HepG2 (cell line): ENCODE measurements at regions of chr9 and their contacts with region 1.

Region 1: GRCh38 chr9:98848450-98849149 is 41.1 kb downstream of the GALNT12 start:
- DNase-seq: peak; percentile 97
- ATAC-seq: peak; percentile 99
- H3K4me3 ChIP-seq: no peak overlapping the region
- H3K27ac ChIP-seq: no peak overlapping the region
- H3K4me1 ChIP-seq: peaks cover 11% of the 10 kb centered on the region
- H3K27me3 ChIP-seq: peaks cover 0 to 1% of the 10 kb centered on the region in 2 experiments; a peak in 2 of 5 replicates
- CTCF ChIP-seq: peak; percentile 96
- EP300 ChIP-seq: no peak
- POLR2A ChIP-seq: no peak
- RAD21 ChIP-seq: peak; percentile 82

Region 2: DNA sequence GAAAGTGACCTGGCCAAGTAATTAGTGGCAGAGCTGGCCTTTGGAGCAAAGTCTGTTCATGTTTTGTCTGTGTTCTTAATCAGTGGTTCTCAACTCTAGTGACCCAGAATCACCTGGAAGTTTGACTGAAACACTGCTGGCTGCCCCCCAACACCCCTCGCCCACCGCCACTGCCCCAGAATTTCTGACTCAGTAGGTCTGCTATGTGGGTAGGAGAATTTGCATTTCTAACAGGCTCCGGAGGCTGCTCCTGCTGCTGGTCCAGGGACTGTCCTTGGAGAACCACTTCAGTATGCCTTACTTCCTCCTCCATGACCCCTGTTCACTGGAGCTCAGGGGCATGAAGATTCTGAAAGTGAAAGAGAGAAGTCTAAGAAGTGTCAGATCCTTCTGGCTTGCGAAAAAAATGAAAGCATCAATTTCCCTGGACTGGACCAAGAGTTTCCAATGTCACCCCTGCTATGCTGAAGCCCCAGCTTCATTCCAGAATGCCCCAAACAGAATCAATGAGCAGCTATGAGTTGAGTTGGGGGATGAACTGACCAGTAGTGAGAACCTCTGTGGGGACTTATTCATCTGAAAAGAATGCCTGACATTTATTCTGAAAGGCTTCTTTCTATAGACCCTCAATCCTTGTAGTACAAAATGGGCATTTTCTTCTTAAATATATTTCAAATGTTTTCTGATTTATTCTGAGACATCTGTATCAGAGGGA is 74.3 kb after region 1 on chr9:
- CTCF ChIA-PET with region 1: no interaction called
- POLR2A ChIA-PET with region 1: no interaction called
- in situ Hi-C with region 1: no loop called
- intact Hi-C with region 1: no loop called
- DNase-seq: no peak
- ATAC-seq: no peak
- H3K4me3 ChIP-seq: no peak overlapping the region
- H3K27ac ChIP-seq: no peak overlapping the region
- H3K4me1 ChIP-seq: peaks cover 12% of the 10 kb centered on the region; the same call in 1 of the 2 replicates
- H3K27me3 ChIP-seq: peaks cover 4 to 12% of the 10 kb centered on the region in 2 experiments; a peak in 3 of 5 replicates
- CTCF ChIP-seq: no peak
- EP300 ChIP-seq: no peak
- POLR2A ChIP-seq: no peak
- RAD21 ChIP-seq: no peak

Region 3: DNA sequence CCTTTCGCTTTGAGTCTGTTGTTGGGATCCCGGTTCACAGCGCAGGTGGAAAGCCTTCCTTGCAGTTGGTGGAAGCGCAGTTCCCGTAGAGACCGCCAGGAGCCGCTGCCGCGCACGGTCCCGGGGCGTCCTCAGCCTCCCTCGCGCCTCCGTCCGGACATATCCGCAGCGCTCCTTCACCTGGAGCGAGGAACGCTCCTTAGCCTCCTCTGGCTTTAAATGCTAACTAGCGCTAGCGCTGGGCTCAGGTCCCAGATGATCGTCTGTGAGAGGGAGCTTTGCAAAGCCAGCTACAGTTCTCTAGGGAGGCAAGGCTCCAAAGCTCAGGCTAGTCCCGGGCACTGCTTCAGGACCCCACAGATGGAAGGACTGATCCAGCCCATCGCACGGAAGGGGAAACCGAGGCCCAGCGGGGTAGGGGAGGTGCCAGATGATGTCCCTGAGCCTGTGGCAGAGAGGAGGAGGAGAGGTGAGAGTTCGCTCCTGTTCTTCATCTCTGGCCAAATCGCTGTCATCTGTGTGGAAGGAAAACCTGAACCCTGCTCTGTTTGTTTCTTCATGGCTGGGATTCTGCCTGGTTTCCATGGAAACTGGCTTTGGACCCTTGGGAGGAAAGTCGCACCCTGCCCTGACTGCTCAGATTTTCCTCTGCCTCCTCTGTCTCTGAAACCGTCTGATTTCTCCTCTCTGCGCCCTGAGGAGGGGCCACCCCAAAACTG is 126.6 kb after region 1 on chr9:
- CTCF ChIA-PET with region 1: interaction called, 5 read pairs
- POLR2A ChIA-PET with region 1: no interaction called
- in situ Hi-C with region 1: no loop called
- intact Hi-C with region 1: loop called (anchors 2 kb)
- DNase-seq: peak; percentile 34
- ATAC-seq: peak; percentile 94
- H3K4me3 ChIP-seq: peak overlapping the region in 1 of 3 experiments; percentile 15; a peak in 1 of 6 replicates
- H3K27ac ChIP-seq: no peak overlapping the region
- H3K4me1 ChIP-seq: peaks cover 6% of the 10 kb centered on the region
- H3K27me3 ChIP-seq: peaks cover 4 to 43% of the 10 kb centered on the region in 2 experiments; a peak in 3 of 5 replicates
- CTCF ChIP-seq: peak; percentile 94
- EP300 ChIP-seq: no peak
- POLR2A ChIP-seq: no peak
- RAD21 ChIP-seq: peak; percentile 76

Region 4: DNA sequence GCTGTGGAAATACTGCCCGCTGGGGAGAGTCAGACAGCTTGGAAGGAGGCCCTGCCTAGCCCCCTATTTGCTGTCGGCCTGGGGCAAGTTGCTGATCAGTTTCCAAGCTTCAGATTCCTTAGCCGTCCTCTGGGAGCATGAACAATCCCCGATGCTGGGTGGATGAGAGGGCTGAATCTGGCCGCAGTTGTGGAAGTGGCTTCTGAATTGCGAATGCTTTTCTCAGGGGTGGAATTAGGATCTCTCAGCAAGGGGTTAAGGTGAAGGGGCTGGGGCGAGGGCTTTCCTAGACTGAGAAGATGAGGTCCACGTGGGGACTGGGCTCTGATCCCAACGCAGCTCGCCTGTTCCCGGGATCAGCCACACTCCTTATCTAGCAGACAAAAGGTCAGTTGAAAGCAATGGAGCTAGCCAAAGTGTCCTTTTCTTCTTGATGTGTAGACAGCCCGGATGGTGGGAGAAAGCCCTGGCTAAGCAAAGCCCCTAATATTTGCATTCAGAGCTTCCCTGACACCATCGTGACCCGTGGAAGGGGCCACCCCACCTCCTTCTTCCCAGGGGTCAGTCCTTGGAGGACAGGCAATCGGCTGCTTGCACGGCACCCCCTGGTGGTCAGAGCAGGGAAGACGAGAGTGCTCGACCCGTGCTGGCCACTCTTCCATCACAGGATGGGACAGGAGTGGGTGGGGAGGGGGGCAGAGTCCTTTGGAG is 150.0 kb after region 1 on chr9:
- CTCF ChIA-PET with region 1: interaction called, 27 read pairs
- POLR2A ChIA-PET with region 1: no interaction called
- in situ Hi-C with region 1: loop called (anchors 5 kb)
- intact Hi-C with region 1: loop called (anchors 1 kb)
- DNase-seq: peak; percentile 20
- ATAC-seq: peak; percentile 97
- H3K4me3 ChIP-seq: no peak overlapping the region
- H3K27ac ChIP-seq: no peak overlapping the region
- H3K4me1 ChIP-seq: no peaks in the 10 kb centered on the region
- H3K27me3 ChIP-seq: peaks cover 0 to 9% of the 10 kb centered on the region in 2 experiments; a peak in 1 of 5 replicates
- CTCF ChIP-seq: peak; percentile 92
- EP300 ChIP-seq: no peak
- POLR2A ChIP-seq: no peak
- RAD21 ChIP-seq: peak; percentile 53; the same call in 1 of the 2 replicates

Region 5: DNA sequence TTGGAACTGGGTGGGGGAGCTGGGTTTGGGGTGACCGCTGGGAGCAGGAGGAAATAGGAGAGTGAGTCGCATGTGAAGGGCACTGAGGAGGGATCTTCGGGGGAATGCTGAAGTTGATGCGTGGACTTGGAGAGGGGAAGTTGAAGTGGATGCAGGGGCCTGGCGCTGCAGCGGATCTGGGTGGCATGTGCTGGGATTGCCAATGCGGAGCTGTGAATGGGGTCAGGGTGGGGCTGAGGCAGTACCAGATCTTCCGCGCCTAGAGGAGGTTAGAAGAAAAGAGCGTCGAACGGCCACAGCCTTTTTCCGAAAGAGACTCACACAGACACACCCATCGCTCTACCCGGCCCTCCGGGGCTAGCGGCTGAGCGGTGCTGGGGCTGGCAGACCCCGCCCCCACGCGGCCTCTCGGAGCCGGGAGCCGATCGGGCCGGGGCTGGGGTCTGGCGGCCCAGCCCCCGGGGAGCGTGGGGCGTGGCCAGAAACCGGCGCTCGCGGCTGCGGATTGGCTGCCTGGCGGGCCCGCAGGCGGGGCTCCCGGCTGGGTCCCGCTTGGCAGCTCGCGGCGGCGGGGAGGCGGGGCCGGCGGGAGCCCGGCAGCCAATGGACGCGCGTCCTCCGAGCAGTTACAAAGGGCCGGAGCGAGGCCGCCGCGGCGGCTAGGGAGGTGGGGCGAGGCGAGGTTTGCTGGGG is 256.0 kb after region 1 on chr9 and contains the start of gene TGFBR1:
- CTCF ChIA-PET with region 1: no interaction called
- POLR2A ChIA-PET with region 1: no interaction called
- in situ Hi-C with region 1: no loop called
- intact Hi-C with region 1: loop called (anchors 1 kb)
- DNase-seq: peak; percentile 78
- ATAC-seq: peak; percentile 91
- H3K4me3 ChIP-seq: peak within 1 kb of the TSS; percentile 65 to 86 (median 78)
- H3K27ac ChIP-seq: peak within 1 kb of the TSS; percentile 46
- H3K4me1 ChIP-seq: peaks cover 41% of the 10 kb centered on the region
- H3K27me3 ChIP-seq: no peaks in the 10 kb centered on the region; a peak in 1 of 5 replicates
- CTCF ChIP-seq: peak; percentile 21; the same call in 1 of the 2 replicates
- EP300 ChIP-seq: no peak
- POLR2A ChIP-seq: no peak; a peak in 1 of 4 replicates
- RAD21 ChIP-seq: no peak
- total RNA-seq, gene TGFBR1: 21.2 and 23.9 TPM in 2 replicates

Region 6: GRCh38 chr9:99130069-99130468 is 281.5 kb after region 1 on chr9:
- CTCF ChIA-PET with region 1: no interaction called
- POLR2A ChIA-PET with region 1: no interaction called
- in situ Hi-C with region 1: loop called (anchors 5 kb)
- intact Hi-C with region 1: no loop called
- DNase-seq: no peak
- ATAC-seq: no peak
- H3K4me3 ChIP-seq: no peak overlapping the region
- H3K27ac ChIP-seq: no peak overlapping the region
- H3K4me1 ChIP-seq: no peaks in the 10 kb centered on the region
- H3K27me3 ChIP-seq: no peaks in the 10 kb centered on the region
- CTCF ChIP-seq: no peak
- EP300 ChIP-seq: no peak
- POLR2A ChIP-seq: no peak
- RAD21 ChIP-seq: no peak

Region 7: GRCh38 chr9:99140685-99141314 is 292.2 kb after region 1 on chr9:
- CTCF ChIA-PET with region 1: interaction called, 6 read pairs
- POLR2A ChIA-PET with region 1: no interaction called
- in situ Hi-C with region 1: no loop called
- intact Hi-C with region 1: loop called (anchors 1 kb)
- DNase-seq: peak; percentile 35
- ATAC-seq: peak; percentile 79
- H3K4me3 ChIP-seq: no peak overlapping the region
- H3K27ac ChIP-seq: no peak overlapping the region
- H3K4me1 ChIP-seq: no peaks in the 10 kb centered on the region
- H3K27me3 ChIP-seq: no peaks in the 10 kb centered on the region
- CTCF ChIP-seq: peak; percentile 75
- EP300 ChIP-seq: no peak
- POLR2A ChIP-seq: no peak
- RAD21 ChIP-seq: peak; percentile 77